Activated CD4-positive, alpha-beta T cell treated with anti-CD3 and anti-CD28 coated beads for 36 hours (primary cell): ENCODE measurements at regions of chr19 and their contacts with region 1.

Region 1: GRCh38 chr19:48965040-48965805 is at the start of gene FTL:
- DNase-seq: peak; percentile 95
- ATAC-seq: peak; percentile 79
- H3K4me3 Mint-ChIP-seq: peak within 1 kb of the TSS; percentile 86
- H3K27ac Mint-ChIP-seq: peak within 1 kb of the TSS; percentile 90
- H3K4me1 Mint-ChIP-seq: peaks cover 53% of the 10 kb centered on the region
- H3K27me3 Mint-ChIP-seq: no peaks in the 10 kb centered on the region
- total RNA-seq, gene FTL: 809 to 1,111 TPM

Region 2: DNA sequence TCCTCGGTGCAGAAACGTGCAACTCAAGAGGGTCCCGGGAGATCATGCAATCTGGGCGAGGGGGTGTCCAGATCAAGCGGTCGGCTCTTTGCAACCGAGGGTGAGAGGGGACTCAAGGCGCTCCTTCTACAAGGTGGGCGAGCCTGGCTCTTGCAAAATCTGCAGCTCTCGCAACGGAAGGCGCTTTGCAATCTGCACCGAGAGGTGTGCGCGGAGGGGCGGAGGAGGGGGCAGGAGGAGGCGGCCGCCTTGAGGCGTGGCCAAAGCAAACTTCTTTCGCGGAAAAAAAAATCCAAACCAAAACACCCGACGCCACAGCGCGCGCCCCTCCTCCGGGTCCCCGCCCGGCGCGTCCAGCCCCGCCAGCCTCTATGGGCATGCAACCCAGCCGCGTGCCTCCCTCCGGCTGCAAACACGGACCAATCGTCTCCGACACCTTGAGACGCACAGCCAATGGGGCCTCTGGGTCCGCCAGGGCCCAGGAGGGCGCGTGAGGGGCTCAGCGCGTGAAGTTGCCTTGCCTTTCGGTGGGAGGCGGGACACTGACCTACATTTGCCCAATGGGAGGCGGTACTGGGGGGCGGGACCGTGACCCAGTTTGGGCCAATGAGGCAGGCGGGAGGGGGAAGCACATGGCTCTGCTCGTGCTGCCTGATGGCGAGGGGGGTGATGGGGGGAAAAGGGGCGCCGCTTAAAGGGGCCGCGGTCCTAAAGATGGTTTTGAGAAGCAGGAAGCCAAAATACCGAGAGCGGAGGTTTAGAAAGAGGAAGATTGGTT is 327.9 kb before region 1 on chr19 and contains the start of gene DBP:
- CTCF ChIA-PET with region 1: no interaction called
- POLR2A ChIA-PET with region 1: interaction called, 5 read pairs
- intact Hi-C with region 1: loop called (anchors 5 to 10 kb)
- DNase-seq: peak; percentile 98
- ATAC-seq: peak; percentile 75
- H3K4me3 Mint-ChIP-seq: peak within 1 kb of the TSS; percentile 83
- H3K27ac Mint-ChIP-seq: peak within 1 kb of the TSS; percentile 99
- H3K4me1 Mint-ChIP-seq: peaks cover 55% of the 10 kb centered on the region
- H3K27me3 Mint-ChIP-seq: no peaks in the 10 kb centered on the region
- total RNA-seq, gene DBP: 8.3 to 12.4 TPM

Region 3: GRCh38 chr19:48835734-48836088 is 129.5 kb before region 1 on chr19:
- CTCF ChIA-PET with region 1: interaction called, 7 read pairs
- POLR2A ChIA-PET with region 1: no interaction called
- intact Hi-C with region 1: loop called in 1 of 2 experiments (anchors 2 kb)
- DNase-seq: peak; percentile 98
- ATAC-seq: peak; percentile 99
- H3K4me3 Mint-ChIP-seq: peak overlapping the region; percentile 71
- H3K27ac Mint-ChIP-seq: peak overlapping the region; percentile 83
- H3K4me1 Mint-ChIP-seq: peaks cover 18% of the 10 kb centered on the region
- H3K27me3 Mint-ChIP-seq: no peaks in the 10 kb centered on the region

Region 4: DNA sequence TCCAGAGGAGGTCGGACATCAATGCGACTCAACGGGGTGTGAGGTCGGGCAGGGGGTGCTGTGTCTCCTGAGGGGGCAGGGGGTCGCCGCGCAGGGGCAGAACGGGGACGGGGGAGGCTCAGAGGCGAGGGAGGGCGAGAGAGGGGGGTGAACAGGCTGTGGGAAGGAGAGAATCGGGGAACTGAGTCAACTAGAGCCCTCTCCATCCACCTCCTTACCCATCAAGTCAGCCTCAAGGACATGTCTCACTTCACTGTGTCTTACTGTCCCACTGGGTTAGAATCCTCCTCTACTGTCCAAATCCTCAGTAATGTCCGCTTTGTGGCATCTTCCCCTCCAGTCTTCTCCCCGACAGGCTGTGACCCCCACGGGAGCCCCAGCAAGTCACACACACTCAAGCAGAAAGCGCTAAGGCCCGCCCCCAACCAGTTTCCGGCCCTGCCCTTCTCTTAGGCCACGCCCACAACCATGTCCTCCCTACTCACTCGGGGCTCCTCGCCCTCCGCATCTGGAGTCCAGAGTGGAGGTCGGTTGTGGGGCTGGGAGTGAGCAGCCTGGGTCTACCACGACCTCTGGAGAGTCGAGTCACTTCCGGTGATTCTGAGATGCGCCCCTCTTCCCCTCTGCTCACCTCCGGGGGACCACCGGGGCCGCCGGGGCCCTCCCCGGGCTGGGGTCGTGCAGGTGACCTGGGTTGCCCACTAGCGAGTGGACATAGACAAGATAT is 106.1 kb before region 1 on chr19:
- CTCF ChIA-PET with region 1: no interaction called
- POLR2A ChIA-PET with region 1: no interaction called
- intact Hi-C with region 1: loop called in 1 of 2 experiments (anchors 2 kb)
- DNase-seq: peak; percentile 92
- ATAC-seq: peak; percentile 92
- H3K4me3 Mint-ChIP-seq: peak overlapping the region; percentile 94
- H3K27ac Mint-ChIP-seq: peak overlapping the region; percentile 93
- H3K4me1 Mint-ChIP-seq: peaks cover 7% of the 10 kb centered on the region
- H3K27me3 Mint-ChIP-seq: no peaks in the 10 kb centered on the region

Region 5: DNA sequence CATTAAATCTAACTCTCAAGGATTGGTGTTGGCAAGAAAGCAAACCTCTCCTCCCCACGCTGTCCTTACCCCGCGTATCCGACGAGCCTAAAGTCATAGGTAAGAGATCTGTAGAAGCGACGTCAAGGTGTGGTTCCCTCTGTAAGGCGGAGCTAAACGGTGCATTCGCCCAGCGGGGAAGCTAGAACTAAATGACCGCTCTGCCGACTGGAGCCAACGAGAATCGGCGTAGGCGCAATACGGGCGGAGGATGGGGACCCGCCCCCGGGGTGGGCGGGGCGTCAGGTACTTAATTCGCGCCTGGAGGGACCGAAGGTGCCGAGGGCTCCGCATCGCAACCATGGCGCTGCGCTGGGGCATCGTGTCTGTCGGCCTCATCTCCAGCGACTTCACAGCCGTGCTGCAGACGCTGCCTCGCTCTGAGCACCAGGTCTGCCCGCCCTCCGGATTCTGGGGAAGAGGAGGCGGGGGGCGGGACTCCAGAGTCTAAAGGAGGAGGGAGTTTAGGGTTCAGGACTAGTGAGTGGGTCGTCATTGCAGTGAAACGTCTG is 31.8 kb before region 1 on chr19 and contains the start of gene DHDH:
- CTCF ChIA-PET with region 1: interaction called, 13 read pairs
- POLR2A ChIA-PET with region 1: no interaction called
- intact Hi-C with region 1: loop called (anchors 2 to 5 kb)
- DNase-seq: peak; percentile 90
- ATAC-seq: peak; percentile 92
- H3K4me3 Mint-ChIP-seq: peak within 1 kb of the TSS; percentile 74
- H3K27ac Mint-ChIP-seq: peak within 1 kb of the TSS; percentile 48
- H3K4me1 Mint-ChIP-seq: peaks cover 10% of the 10 kb centered on the region
- H3K27me3 Mint-ChIP-seq: peaks cover 2% of the 10 kb centered on the region
- total RNA-seq, gene DHDH: 1.4 to 2.4 TPM

Region 6: GRCh38 chr19:49297403-49297802 is 332.2 kb after region 1 on chr19:
- CTCF ChIA-PET with region 1: no interaction called
- POLR2A ChIA-PET with region 1: no interaction called
- intact Hi-C with region 1: no loop called
- DNase-seq: no peak
- ATAC-seq: no peak
- H3K4me3 Mint-ChIP-seq: no peak overlapping the region
- H3K27ac Mint-ChIP-seq: no peak overlapping the region
- H3K4me1 Mint-ChIP-seq: peaks cover 3% of the 10 kb centered on the region
- H3K27me3 Mint-ChIP-seq: no peaks in the 10 kb centered on the region